ENCODE measurements at regions of chr20 and their contacts with region 1.

Region 1: DNA sequence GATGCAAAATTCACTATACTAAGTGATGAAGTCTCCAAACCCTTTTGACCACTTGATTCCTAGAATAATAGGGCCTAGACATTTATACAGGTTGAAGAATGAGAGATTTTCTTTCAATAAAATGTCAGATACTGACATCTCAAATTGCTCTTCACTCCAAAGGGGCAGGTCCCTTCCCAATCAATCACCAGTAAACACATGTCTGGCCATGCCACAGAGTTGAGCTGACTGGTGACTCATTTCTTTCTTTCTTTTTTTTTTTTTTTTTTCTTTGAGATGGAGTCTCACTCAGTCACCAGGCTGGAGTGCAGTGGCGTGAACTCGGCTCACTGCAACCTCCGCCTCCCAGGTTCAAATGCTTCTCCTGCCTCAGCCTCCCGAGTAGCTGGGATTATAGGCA is 388.6 kb upstream of the BTBD3 start:
- DNase-seq: no peak
- H3K4me3 ChIP-seq: no peak overlapping the region
- CTCF ChIP-seq: no peak

Region 2: GRCh38 chr20:11544029-11544678 is 15.1 kb after region 1 on chr20:
- CTCF ChIA-PET with region 1: interaction called, 14 read pairs
- POLR2A ChIA-PET with region 1: no interaction called
- DNase-seq: peak; percentile 12
- H3K4me3 ChIP-seq: no peak overlapping the region; the same call in 1 of the 2 replicates
- CTCF ChIP-seq: peak; percentile 36

Measured in AG04449 (cell line).